Activated B cell treated with CpG ODN at 0.5 μM for 24 hours (primary cell): ENCODE measurements at regions of chr19 and their contacts with region 1.

Region 1: GRCh38 chr19:29610563-29611271 is 4.6 kb downstream of the POP4 start:
- DNase-seq: peak; percentile 65
- ATAC-seq: peak; percentile 80
- H3K4me3 Mint-ChIP-seq: no peak overlapping the region
- H3K27ac Mint-ChIP-seq: peak overlapping the region; percentile 83
- H3K4me1 Mint-ChIP-seq: peaks cover 27% of the 10 kb centered on the region
- H3K27me3 Mint-ChIP-seq: no peaks in the 10 kb centered on the region
- CTCF ChIP-seq: peak; percentile 32

Region 2: DNA sequence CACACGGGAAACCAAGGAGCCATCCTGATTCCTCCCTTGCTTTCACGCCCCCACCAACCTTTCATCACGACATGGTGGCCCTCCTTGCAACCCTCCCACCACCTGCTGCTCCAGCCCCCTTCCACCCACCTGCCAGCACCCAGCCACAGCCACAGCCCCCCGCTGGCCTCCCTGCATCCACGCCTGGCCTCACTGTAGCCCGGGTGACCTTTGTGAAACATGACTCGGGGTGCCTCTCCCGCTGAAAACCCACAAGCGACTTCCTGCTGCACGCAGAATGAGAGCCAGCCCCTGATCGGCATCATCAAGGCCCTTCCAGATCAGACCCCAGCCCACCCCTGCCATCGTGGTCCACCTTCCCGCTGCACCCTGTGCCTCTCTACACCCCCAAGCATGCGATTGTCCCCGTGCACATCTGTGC is 10.2 kb after region 1 on chr19:
- CTCF ChIA-PET with region 1: interaction called, 11 read pairs
- POLR2A ChIA-PET with region 1: interaction called, 8 read pairs
- intact Hi-C with region 1: no loop called
- DNase-seq: no peak
- ATAC-seq: no peak
- H3K4me3 Mint-ChIP-seq: no peak overlapping the region
- H3K27ac Mint-ChIP-seq: no peak overlapping the region
- H3K4me1 Mint-ChIP-seq: peaks cover 12% of the 10 kb centered on the region
- H3K27me3 Mint-ChIP-seq: peaks cover 9% of the 10 kb centered on the region
- CTCF ChIP-seq: no peak

Region 3: DNA sequence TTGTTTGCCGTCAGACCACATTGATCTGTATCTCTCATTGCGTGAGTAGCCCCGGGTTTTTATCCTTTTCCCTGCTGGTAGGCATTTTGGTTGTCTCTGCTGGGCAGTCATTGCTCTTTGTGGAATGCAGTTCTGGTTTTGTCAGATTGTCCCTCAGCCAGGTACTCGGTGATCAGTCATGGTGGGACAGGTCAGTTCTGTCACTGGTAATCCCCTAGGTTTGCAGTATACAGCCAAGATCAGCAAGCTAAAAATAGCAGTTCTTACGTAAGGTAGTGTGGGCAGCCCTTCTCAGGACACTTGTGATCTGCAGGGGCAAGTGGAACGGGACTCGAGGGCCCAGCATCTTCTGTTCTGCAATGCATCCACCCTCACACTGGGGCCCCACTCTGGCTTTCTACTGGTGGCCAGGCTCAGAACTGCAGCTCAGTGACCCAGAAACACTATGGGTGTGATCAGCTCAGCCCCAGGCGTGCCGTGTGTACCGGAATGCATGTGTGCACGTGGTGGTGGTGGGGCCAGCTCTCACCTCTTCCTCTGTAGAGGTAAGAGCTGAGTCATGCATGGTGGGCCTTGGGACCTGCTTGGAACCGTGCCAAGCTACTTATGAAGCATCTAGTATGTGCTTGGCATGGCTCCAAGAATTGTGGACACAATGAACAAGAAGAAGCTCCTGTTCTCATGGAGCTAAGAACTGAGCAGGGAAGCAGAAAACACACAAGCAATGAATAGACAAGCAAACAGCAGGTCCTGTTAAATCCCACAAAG is 60.9 kb after region 1 on chr19:
- CTCF ChIA-PET with region 1: interaction called, 20 read pairs
- POLR2A ChIA-PET with region 1: interaction called, 62 read pairs
- intact Hi-C with region 1: loop called (anchors 1 kb)
- DNase-seq: peak; percentile 42
- ATAC-seq: peak; percentile 79
- H3K4me3 Mint-ChIP-seq: peak overlapping the region; percentile 46
- H3K27ac Mint-ChIP-seq: peak overlapping the region; percentile 93
- H3K4me1 Mint-ChIP-seq: peaks cover 58% of the 10 kb centered on the region
- H3K27me3 Mint-ChIP-seq: no peaks in the 10 kb centered on the region
- CTCF ChIP-seq: no peak

Region 4: GRCh38 chr19:29694669-29695627 is 84.2 kb after region 1 on chr19:
- CTCF ChIA-PET with region 1: interaction called, 43 read pairs
- POLR2A ChIA-PET with region 1: interaction called, 11 read pairs
- intact Hi-C with region 1: loop called (anchors 1 kb)
- DNase-seq: peak; percentile 69
- ATAC-seq: peak; percentile 96
- H3K4me3 Mint-ChIP-seq: no peak overlapping the region
- H3K27ac Mint-ChIP-seq: no peak overlapping the region
- H3K4me1 Mint-ChIP-seq: peaks cover 19% of the 10 kb centered on the region
- H3K27me3 Mint-ChIP-seq: no peaks in the 10 kb centered on the region
- CTCF ChIP-seq: peak; percentile 76

Region 5: GRCh38 chr19:29844891-29845572 is 234.3 kb after region 1 on chr19:
- CTCF ChIA-PET with region 1: no interaction called
- POLR2A ChIA-PET with region 1: interaction called, 23 read pairs
- intact Hi-C with region 1: loop called (anchors 1 kb)
- DNase-seq: peak; percentile 94
- ATAC-seq: peak; percentile 80
- H3K4me3 Mint-ChIP-seq: peak overlapping the region; percentile 86
- H3K27ac Mint-ChIP-seq: peak overlapping the region; percentile 68
- H3K4me1 Mint-ChIP-seq: peaks cover 12% of the 10 kb centered on the region
- H3K27me3 Mint-ChIP-seq: peaks cover 9% of the 10 kb centered on the region
- CTCF ChIP-seq: no peak

Region 6: DNA sequence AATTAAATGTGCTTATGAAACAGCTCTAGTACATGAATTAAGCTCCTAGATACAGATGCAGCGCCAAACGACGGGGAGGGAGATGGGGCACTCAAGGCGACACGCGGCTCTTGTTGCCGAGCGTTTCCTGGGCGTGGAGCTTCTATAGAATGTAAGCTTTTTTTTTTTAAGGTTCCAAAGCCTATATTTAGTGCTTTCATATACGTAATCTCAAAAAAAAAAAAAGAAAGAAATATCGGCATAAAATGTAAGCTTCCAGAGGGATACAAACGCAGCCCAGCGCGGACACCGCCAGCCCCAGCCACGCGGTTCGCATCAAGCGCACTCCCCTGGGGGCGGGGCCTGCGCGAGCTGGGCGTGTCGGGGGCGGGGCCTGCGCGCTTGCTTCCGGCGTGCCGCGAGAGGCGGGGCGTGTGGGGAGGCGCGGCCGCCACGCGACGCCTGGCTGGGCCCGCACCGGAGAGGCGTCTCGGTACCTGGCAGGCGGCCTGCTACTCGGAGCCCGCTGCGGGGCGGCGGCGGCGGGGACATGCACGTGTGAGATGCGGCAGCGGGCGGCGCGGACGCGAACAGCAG is 331.2 kb after region 1 on chr19 and contains the start of gene URI1:
- CTCF ChIA-PET with region 1: no interaction called
- POLR2A ChIA-PET with region 1: interaction called, 25 read pairs
- intact Hi-C with region 1: loop called (anchors 1 kb)
- DNase-seq: peak; percentile 99
- ATAC-seq: peak; percentile 91
- H3K4me3 Mint-ChIP-seq: peak within 1 kb of the TSS; percentile 96
- H3K27ac Mint-ChIP-seq: peak within 1 kb of the TSS; percentile 92
- H3K4me1 Mint-ChIP-seq: peaks cover 36% of the 10 kb centered on the region
- H3K27me3 Mint-ChIP-seq: peaks cover 7% of the 10 kb centered on the region
- CTCF ChIP-seq: no peak
- total RNA-seq, gene URI1: 49.8 and 50.6 TPM in 2 replicates